ENCODE measurements at regions of chr2 and their contacts with region 1.

Region 1: GRCh38 chr2:38565333-38565732 is 37.4 kb downstream of the HNRNPLL start:
- DNase-seq: no peak
- CTCF ChIP-seq: no peak

Region 2: GRCh38 chr2:38549071-38549704 is 16.1 kb before region 1 on chr2:
- CTCF ChIA-PET with region 1: interaction called, 20 read pairs
- POLR2A ChIA-PET with region 1: no interaction called
- DNase-seq: no peak
- CTCF ChIP-seq: no peak

Region 3: GRCh38 chr2:38554973-38555595 is 10.2 kb before region 1 on chr2:
- CTCF ChIA-PET with region 1: interaction called, 20 read pairs
- POLR2A ChIA-PET with region 1: no interaction called
- DNase-seq: no peak
- CTCF ChIP-seq: peak; percentile 30

Measured in GM10248 (cell line).